PC-3 (cell line): ENCODE measurements at regions of chr3 and their contacts with region 1.

Region 1: DNA sequence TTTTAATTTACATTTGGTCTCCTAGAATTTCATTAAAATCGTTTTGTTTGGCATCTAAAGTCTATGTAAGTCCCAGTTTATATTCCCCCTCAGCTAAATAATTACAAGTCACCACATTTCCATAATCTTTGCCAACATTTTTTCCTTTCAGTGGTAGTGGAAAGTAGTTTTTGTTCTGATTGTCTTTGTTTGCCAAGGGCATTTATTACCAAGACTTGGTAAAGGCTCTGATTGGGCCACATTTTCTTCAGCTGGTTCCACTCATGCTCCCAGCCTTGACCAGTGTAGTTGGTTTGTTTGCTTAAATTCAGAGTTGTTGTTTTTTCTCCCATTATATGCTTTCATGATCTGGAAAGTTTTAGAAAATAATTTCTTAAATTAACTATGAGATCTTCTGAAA is 153.4 kb upstream of the MME start:
- DNase-seq: no peak
- ATAC-seq: no peak
- H3K4me3 ChIP-seq: no peak overlapping the region
- H3K27ac ChIP-seq: no peak overlapping the region
- H3K4me1 ChIP-seq: no peaks in the 10 kb centered on the region
- H3K27me3 ChIP-seq: no peaks in the 10 kb centered on the region
- CTCF ChIP-seq: no peak

Region 2: GRCh38 chr3:154987796-154988195 is 61.1 kb after region 1 on chr3:
- CTCF ChIA-PET with region 1: no interaction called
- POLR2A ChIA-PET with region 1: no interaction called
- intact Hi-C with region 1: no loop called
- DNase-seq: no peak
- ATAC-seq: no peak
- H3K4me3 ChIP-seq: no peak overlapping the region
- H3K27ac ChIP-seq: no peak overlapping the region
- H3K4me1 ChIP-seq: no peaks in the 10 kb centered on the region
- H3K27me3 ChIP-seq: no peaks in the 10 kb centered on the region
- CTCF ChIP-seq: no peak

Region 3: GRCh38 chr3:155053756-155054155 is 127.0 kb after region 1 on chr3:
- CTCF ChIA-PET with region 1: no interaction called
- POLR2A ChIA-PET with region 1: interaction called, 23 read pairs
- intact Hi-C with region 1: no loop called
- DNase-seq: no peak
- ATAC-seq: no peak
- H3K4me3 ChIP-seq: no peak overlapping the region
- H3K27ac ChIP-seq: no peak overlapping the region
- H3K4me1 ChIP-seq: no peaks in the 10 kb centered on the region
- H3K27me3 ChIP-seq: no peaks in the 10 kb centered on the region
- CTCF ChIP-seq: no peak